Prostate gland (tissue), 2 donors: ENCODE measurements at regions of chr1 and their contacts with region 1.

Region 1: GRCh38 chr1:116168277-116169097 is 57.3 kb downstream of the MAB21L3 start:
- DNase-seq: peak; percentile 62
- H3K4me3 ChIP-seq: peak overlapping the region; percentile 47 to 50
- H3K27ac ChIP-seq: peak overlapping the region; percentile 63 to 66
- H3K4me1 ChIP-seq: peaks cover 2% of the 10 kb centered on the region
- H3K27me3 ChIP-seq: no peaks in the 10 kb centered on the region
- CTCF ChIP-seq: peak; percentile 72 to 91 (median 88)
- POLR2A ChIP-seq: no peak

Region 2: GRCh38 chr1:116151739-116152576 is 16.5 kb before region 1 on chr1:
- intact Hi-C with region 1: loop called (anchors 2 kb)
- DNase-seq: peak; percentile 71
- H3K4me3 ChIP-seq: peak overlapping the region; percentile 29 to 37
- H3K27ac ChIP-seq: peak overlapping the region; percentile 55 to 60
- H3K4me1 ChIP-seq: no peaks in the 10 kb centered on the region
- H3K27me3 ChIP-seq: no peaks in the 10 kb centered on the region
- CTCF ChIP-seq: peak; percentile 90 to 97 (median 94)
- POLR2A ChIP-seq: peak; percentile 7